ENCODE measurements at regions of chr11 and their contacts with region 1.

Region 1: DNA sequence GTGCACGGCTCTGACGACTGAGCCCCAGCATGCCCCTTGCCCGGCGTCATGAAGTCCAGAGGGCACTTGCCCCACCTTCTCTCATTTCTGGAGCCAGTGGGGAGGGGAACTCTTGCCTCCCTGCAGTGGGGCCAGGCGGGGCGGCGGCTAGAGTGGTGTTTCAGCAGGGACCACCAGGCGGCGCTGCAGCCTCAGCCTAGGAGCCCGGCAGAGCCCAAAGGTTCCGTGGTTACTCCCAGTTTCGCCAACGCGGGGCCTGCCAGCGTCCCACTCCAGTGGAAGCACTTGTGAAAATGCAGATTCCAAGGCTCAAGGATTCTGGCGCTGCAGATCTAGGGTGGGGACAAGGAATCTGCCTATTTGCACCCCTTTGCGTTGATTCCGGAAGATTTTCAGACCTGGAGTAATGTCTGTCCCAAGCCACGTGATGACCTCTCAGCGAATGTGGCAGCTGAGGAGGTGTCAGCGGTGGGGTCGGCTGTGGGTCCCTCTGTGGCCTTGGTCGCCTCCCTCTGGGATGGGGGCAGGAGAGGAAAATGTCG is 55.7 kb downstream of the CD82 start:
- DNase-seq: peak in 1 of 2 experiments; percentile 72
- H3K4me3 ChIP-seq: no peak overlapping the region
- H3K27ac ChIP-seq: no peak overlapping the region
- H3K4me1 ChIP-seq: no peaks in the 10 kb centered on the region
- H3K27me3 ChIP-seq: 0 out of 2 replicates have a peak, but pooled peaks cover under 1% of the 10 kb centered on the region
- CTCF ChIP-seq: peak; percentile 99

Region 2: GRCh38 chr11:44095506-44096394 is 525.5 kb before region 1 on chr11 and contains the start of gene EXT2:
- CTCF ChIA-PET with region 1: no interaction called
- POLR2A ChIA-PET with region 1: no interaction called
- intact Hi-C with region 1: loop called (anchors 5 kb)
- DNase-seq: peak; percentile 60 to 88
- H3K4me3 ChIP-seq: peak within 1 kb of the TSS; percentile 82
- H3K27ac ChIP-seq: peak within 1 kb of the TSS; percentile 41
- H3K4me1 ChIP-seq: peaks cover 16% of the 10 kb centered on the region
- H3K27me3 ChIP-seq: no peaks in the 10 kb centered on the region
- CTCF ChIP-seq: peak; percentile 87
- total RNA-seq, gene EXT2: 72.4 and 74.8 TPM in 2 replicates

Region 3: GRCh38 chr11:44565211-44565952 is 55.8 kb before region 1 on chr11 and contains the start of gene CD82:
- CTCF ChIA-PET with region 1: interaction called, 14 read pairs
- POLR2A ChIA-PET with region 1: no interaction called
- intact Hi-C with region 1: no loop called
- DNase-seq: peak; percentile 93 to 100
- H3K4me3 ChIP-seq: peak within 1 kb of the TSS; percentile 58
- H3K27ac ChIP-seq: peak within 1 kb of the TSS; percentile 75
- H3K4me1 ChIP-seq: peaks cover 14% of the 10 kb centered on the region
- H3K27me3 ChIP-seq: no peaks in the 10 kb centered on the region
- CTCF ChIP-seq: peak; percentile 46; the same call in 1 of the 2 replicates
- total RNA-seq, gene CD82: 30.7 and 46.0 TPM in 2 replicates

Region 4: DNA sequence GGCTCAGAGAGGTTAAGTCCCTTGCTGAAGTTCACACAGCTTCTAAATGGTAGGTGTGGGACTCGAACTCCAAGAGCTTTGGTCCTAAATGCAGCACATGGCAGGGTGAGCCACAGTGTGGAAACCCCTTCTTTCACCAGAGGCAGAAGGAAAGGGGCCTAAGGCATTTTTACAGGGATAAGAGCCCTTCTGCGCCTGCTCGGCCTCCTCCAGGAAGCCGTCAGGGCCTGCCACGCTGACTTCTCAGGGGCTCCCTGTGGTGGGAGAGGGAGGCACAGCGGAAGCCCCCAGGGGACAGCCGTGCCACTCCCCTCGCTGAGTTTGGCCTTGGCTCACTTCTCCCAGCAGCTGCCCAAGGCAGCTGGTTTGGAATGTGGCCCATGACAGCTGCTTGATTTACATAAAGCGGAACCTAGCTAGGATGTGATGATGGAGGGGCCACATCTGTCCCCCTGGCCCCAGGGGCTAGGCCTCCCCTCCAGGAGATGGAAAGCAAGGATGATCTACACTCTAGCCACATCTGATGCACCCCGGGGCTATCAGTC is 20.3 kb before region 1 on chr11:
- CTCF ChIA-PET with region 1: no interaction called
- POLR2A ChIA-PET with region 1: no interaction called
- intact Hi-C with region 1: no loop called
- DNase-seq: no peak
- H3K4me3 ChIP-seq: no peak overlapping the region
- H3K27ac ChIP-seq: no peak overlapping the region
- H3K4me1 ChIP-seq: no peaks in the 10 kb centered on the region
- H3K27me3 ChIP-seq: no peaks in the 10 kb centered on the region
- CTCF ChIP-seq: no peak

Region 5: DNA sequence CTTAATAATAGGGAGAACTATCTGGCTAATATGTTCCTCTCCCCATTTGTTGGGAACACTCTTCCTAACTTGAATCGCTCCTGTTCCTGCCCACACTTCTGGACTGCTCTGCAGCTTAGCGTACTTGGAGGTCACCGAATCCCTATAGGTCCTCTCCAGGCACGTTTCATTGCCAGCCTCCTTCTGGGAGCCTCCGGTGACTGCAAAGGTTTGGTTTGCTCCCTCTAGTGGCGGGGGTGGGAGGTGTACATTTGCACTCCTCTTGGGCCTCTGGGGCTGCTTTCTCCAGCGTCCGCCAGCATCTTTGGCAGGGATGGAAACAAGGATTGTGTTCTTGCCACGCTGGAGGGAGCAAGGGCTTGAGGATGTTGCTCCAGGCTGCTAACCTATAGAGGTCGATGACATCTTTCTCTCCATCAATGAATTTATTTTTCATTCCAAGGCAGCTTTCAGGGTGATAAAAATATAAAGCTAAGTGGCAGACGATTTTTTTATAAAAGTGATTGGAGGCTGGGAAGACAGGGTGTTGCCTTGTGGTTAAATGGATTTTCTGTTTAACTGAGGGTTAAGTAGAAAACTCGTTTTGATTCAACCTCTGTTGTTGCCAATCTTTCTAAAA is 154.3 kb after region 1 on chr11:
- CTCF ChIA-PET with region 1: interaction called, 3 read pairs
- POLR2A ChIA-PET with region 1: no interaction called
- intact Hi-C with region 1: loop called (anchors 5 kb)
- DNase-seq: peak; percentile 41 to 45
- H3K4me3 ChIP-seq: no peak overlapping the region
- H3K27ac ChIP-seq: no peak overlapping the region
- H3K4me1 ChIP-seq: no peaks in the 10 kb centered on the region
- H3K27me3 ChIP-seq: peaks cover 40% of the 10 kb centered on the region
- CTCF ChIP-seq: peak; percentile 91

Region 6: GRCh38 chr11:44911029-44911814 is 290.0 kb after region 1 on chr11:
- CTCF ChIA-PET with region 1: interaction called, 5 read pairs
- POLR2A ChIA-PET with region 1: no interaction called
- intact Hi-C with region 1: loop called (anchors 1 kb)
- DNase-seq: peak; percentile 59 to 69
- H3K4me3 ChIP-seq: no peak overlapping the region
- H3K27ac ChIP-seq: no peak overlapping the region
- H3K4me1 ChIP-seq: no peaks in the 10 kb centered on the region
- H3K27me3 ChIP-seq: peaks cover 46% of the 10 kb centered on the region
- CTCF ChIP-seq: peak; percentile 95

Region 7: DNA sequence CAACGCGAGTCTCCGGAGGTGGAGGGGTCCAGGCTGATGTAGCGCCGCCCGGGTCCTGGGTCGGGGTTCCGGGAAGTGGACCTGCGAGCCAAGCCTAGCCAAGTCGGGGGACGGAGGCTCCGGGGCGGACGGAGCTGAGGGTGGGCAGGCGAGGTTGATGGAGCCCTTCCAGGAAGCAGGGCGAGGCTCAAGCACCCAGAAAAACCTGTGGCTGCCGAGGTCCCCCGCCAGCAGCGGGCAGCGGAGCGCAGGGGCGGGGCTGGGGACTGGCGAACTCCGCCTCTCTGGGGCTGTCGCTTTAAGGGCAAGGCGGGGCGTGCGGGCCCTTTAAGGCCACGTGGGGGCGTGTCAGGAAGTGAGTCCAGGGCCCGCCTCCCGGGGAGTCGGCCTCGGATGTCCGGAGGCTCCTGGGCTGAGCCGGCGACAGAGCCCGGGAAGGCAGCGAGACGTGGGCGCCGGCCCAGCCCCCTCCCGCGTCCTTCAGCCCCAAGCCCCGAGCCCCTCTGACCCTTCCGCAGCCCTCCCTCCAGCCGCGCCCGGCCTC is 1183.6 kb after region 1 on chr11 and contains the start of gene SLC35C1:
- CTCF ChIA-PET with region 1: interaction called, 15 read pairs
- POLR2A ChIA-PET with region 1: no interaction called
- intact Hi-C with region 1: no loop called
- DNase-seq: peak; percentile 88 to 98
- H3K4me3 ChIP-seq: peak within 1 kb of the TSS; percentile 84
- H3K27ac ChIP-seq: no peak within 1 kb of the TSS
- H3K4me1 ChIP-seq: peaks cover 28% of the 10 kb centered on the region
- H3K27me3 ChIP-seq: no peaks in the 10 kb centered on the region
- CTCF ChIP-seq: peak; percentile 32; the same call in 1 of the 2 replicates
- total RNA-seq, gene SLC35C1: 15.2 and 15.6 TPM in 2 replicates